Naive thymus-derived CD4-positive, alpha-beta T cell (primary cell): ENCODE measurements at regions of chr19 and their contacts with region 1.

Region 1: DNA sequence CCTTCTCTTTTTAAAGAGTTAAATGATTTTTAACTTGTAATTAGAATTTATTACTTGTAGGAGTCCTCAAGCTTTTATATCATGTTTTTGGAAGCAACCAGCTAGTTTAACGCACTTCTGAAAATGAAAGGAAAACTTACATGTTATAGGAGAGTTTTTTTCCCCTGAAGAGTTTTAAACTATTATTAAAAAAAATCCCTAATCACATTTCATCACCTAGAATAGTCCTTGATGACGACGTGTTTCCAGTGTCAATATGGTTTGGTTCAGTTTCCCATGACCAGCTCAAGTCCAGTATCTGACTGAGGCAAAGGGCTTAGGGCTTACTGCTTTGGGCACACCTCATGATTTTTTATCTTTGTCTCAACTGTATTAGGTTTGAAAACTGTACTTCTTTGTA is 36.0 kb downstream of the URI1 start:
- DNase-seq: no peak
- ATAC-seq: no peak
- H3K4me3 ChIP-seq: no peak overlapping the region
- H3K4me3 Mint-ChIP-seq: peak overlapping the region in 5 of 10 donors; percentile 23 to 59 (median 39)
- H3K27ac ChIP-seq: no peak overlapping the region
- H3K27ac Mint-ChIP-seq: peak overlapping the region in 1 of 9 donors; percentile 62
- H3K4me1 ChIP-seq: peaks cover 0 to 29% of the 10 kb centered on the region in 2 donors
- H3K4me1 Mint-ChIP-seq: peaks cover 25 to 92% (median 77%) of the 10 kb centered on the region in 7 donors
- H3K27me3 ChIP-seq: no peaks in the 10 kb centered on the region
- H3K27me3 Mint-ChIP-seq: no peaks in the 10 kb centered on the region

Region 2: DNA sequence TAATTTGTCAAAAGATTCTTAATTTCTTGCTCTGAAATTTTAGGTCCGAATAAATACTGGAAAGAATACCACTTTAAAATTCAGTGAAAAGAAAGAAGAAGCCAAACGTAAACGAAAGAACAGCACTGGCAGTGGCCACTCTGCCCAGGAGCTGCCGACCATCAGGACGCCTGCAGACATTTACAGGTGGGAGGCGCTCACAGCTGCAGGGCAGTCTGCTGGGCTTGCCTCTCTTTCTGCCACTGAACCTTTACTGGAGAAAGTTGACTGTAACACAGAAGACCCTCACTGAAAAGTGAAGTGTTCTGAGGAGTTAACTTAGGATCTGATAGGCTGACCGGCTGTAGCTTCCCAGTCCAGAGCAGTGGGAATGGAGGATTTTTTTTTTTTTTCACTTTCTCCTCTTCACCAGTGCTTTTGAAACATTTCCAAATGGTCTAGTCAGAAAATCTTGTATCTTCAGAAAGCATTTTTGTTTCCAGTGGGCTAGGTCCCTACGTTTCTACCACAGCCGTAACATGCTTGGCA is 33.0 kb after region 1 on chr19:
- CTCF ChIA-PET with region 1: no interaction called
- POLR2A ChIA-PET with region 1: no interaction called
- intact Hi-C with region 1: loop called in 1 of 2 experiments (anchors 5 kb)
- DNase-seq: no peak
- ATAC-seq: no peak
- H3K4me3 ChIP-seq: no peak overlapping the region
- H3K4me3 Mint-ChIP-seq: no peak overlapping the region
- H3K27ac ChIP-seq: no peak overlapping the region
- H3K27ac Mint-ChIP-seq: no peak overlapping the region
- H3K4me1 ChIP-seq: peaks cover 2 to 5% of the 10 kb centered on the region in 2 donors
- H3K4me1 Mint-ChIP-seq: peaks cover 5 to 20% (median 14%) of the 10 kb centered on the region in 7 donors
- H3K27me3 ChIP-seq: no peaks in the 10 kb centered on the region
- H3K27me3 Mint-ChIP-seq: no peaks in the 10 kb centered on the region

Region 3: GRCh38 chr19:30105727-30106126 is 127.6 kb after region 1 on chr19:
- CTCF ChIA-PET with region 1: no interaction called
- POLR2A ChIA-PET with region 1: no interaction called
- intact Hi-C with region 1: no loop called
- DNase-seq: no peak
- ATAC-seq: no peak
- H3K4me3 ChIP-seq: no peak overlapping the region
- H3K4me3 Mint-ChIP-seq: no peak overlapping the region
- H3K27ac ChIP-seq: no peak overlapping the region
- H3K27ac Mint-ChIP-seq: no peak overlapping the region
- H3K4me1 ChIP-seq: no peaks in the 10 kb centered on the region
- H3K4me1 Mint-ChIP-seq: no peaks in the 10 kb centered on the region
- H3K27me3 ChIP-seq: no peaks in the 10 kb centered on the region
- H3K27me3 Mint-ChIP-seq: peaks cover 0 to 14% (median 6%) of the 10 kb centered on the region in 5 donors